Transverse colon (tissue), 4 donors: ENCODE measurements at regions of chr7 and their contacts with region 1.

Region 1: DNA sequence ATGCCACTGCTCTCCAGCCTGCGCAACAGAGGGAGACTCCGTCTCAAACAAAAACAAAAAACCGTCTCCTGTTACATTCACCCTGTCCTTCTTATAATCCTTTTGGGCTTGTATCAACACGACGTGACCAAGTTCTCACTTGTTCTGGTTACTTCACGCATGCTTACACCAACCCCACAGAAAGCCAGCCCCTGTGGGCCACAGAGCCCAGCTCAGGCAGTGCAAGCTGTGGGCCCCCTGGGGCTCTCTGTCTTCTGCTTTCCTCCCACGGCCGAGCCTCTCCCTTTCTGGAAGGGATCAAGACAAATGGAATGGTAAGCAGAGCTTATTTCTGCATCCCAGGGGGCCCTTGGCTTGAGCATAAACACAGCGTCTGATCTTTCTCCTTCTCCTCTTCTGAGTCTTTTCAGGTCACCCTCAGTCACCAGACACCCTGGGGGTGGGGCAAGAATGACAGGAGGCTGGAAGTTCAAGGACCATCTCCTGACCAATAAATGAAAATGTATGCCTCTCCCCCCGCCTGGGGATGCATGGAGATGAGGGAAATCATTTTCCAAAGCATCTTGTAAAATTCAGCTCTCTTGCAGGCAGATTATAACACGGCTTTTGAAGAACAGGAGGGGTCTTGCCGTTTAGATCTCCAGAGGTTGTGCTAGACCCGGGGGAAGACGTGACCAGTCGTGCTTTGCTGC is 19.0 kb upstream of the TRIM56 start:
- DNase-seq: no peak
- H3K4me3 ChIP-seq: no peak overlapping the region
- H3K27ac ChIP-seq: no peak overlapping the region
- H3K4me1 ChIP-seq: no peaks in the 10 kb centered on the region
- H3K27me3 ChIP-seq: peaks cover 48% of the 10 kb centered on the region
- CTCF ChIP-seq: no peak
- EP300 ChIP-seq: no peak
- POLR2A ChIP-seq: no peak

Region 2: GRCh38 chr7:100964630-100965029 is 101.7 kb before region 1 on chr7:
- in situ Hi-C with region 1: loop called in 1 of 4 experiments (anchors 5 kb)
- intact Hi-C with region 1: no loop called
- DNase-seq: no peak
- H3K4me3 ChIP-seq: no peak overlapping the region
- H3K27ac ChIP-seq: no peak overlapping the region
- H3K4me1 ChIP-seq: peaks cover 9 to 37% (median 20%) of the 10 kb centered on the region in 4 donors
- H3K27me3 ChIP-seq: peaks cover 49% of the 10 kb centered on the region
- CTCF ChIP-seq: no peak
- EP300 ChIP-seq: no peak
- POLR2A ChIP-seq: no peak

Region 3: GRCh38 chr7:102169651-102170392 is 1103.5 kb after region 1 on chr7:
- in situ Hi-C with region 1: no loop called
- intact Hi-C with region 1: no loop called
- DNase-seq: no peak
- H3K4me3 ChIP-seq: no peak overlapping the region
- H3K27ac ChIP-seq: peak overlapping the region in 2 of 4 donors; percentile 34 to 51
- H3K4me1 ChIP-seq: peaks cover 0 to 4% (median 0%) of the 10 kb centered on the region in 4 donors
- H3K27me3 ChIP-seq: no peaks in the 10 kb centered on the region
- CTCF ChIP-seq: no peak
- EP300 ChIP-seq: no peak
- POLR2A ChIP-seq: no peak